ENCODE measurements at regions of chr4 and their contacts with region 1.

Region 1: DNA sequence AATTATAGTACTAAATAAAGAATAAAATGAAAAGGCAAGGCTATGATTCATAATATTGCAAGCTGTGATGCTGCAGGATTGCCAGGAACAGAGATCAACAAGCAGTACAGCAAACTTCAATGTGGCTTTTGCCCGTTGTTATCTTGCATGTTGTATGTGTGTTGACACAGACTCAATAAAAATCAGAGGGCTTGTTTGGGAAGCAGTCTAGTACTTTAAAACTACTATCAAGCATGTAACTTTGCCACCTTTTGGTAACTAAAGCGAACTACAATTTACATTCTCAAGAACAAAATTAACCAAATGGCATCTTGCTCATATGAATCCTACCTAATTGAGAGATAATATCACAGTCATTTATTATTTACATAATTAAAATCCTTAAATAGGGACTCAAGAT is 79.8 kb upstream of the GPM6A start:
- DNase-seq: peak; percentile 38
- ATAC-seq: peak; percentile 78
- H3K4me3 ChIP-seq: no peak overlapping the region
- H3K27ac ChIP-seq: no peak overlapping the region
- H3K4me1 ChIP-seq: no peaks in the 10 kb centered on the region
- H3K27me3 ChIP-seq: no peaks in the 10 kb centered on the region
- CTCF ChIP-seq: peak; percentile 27 to 49 (median 47); a peak in 4 of 6 replicates
- POLR2A ChIP-seq: no peak
- RAD21 ChIP-seq: peak; percentile 63

Region 2: DNA sequence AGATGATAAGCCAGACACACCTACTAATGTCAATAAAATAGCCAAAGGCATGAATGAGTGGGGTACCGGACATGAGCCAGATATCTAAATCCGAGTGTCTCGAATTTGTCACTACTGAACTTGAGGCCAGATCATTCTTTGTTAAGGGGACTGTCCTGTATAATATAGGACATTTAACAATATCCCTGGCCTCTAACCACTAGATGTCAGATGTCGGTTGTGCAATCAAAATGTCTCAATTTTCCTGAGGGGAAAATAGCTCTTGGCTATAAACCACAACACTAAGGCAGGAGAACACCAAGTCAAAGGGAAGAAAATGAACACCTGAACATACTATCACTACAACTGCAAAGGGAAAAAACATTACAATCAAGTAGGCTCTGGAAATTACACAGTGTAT is 234.3 kb before region 1 on chr4:
- CTCF ChIA-PET with region 1: no interaction called
- POLR2A ChIA-PET with region 1: no interaction called
- RAD21 ChIA-PET with region 1: no interaction called
- intact Hi-C with region 1: loop called (anchors 10 kb)
- DNase-seq: no peak
- ATAC-seq: peak; percentile 49
- H3K4me3 ChIP-seq: no peak overlapping the region
- H3K27ac ChIP-seq: no peak overlapping the region
- H3K4me1 ChIP-seq: no peaks in the 10 kb centered on the region
- H3K27me3 ChIP-seq: no peaks in the 10 kb centered on the region
- CTCF ChIP-seq: no peak; a peak in 1 of 6 replicates
- POLR2A ChIP-seq: no peak
- RAD21 ChIP-seq: peak; percentile 47